CD4-positive, alpha-beta T cell (primary cell): ENCODE measurements at regions of chr6 and their contacts with region 1.

Region 1: DNA sequence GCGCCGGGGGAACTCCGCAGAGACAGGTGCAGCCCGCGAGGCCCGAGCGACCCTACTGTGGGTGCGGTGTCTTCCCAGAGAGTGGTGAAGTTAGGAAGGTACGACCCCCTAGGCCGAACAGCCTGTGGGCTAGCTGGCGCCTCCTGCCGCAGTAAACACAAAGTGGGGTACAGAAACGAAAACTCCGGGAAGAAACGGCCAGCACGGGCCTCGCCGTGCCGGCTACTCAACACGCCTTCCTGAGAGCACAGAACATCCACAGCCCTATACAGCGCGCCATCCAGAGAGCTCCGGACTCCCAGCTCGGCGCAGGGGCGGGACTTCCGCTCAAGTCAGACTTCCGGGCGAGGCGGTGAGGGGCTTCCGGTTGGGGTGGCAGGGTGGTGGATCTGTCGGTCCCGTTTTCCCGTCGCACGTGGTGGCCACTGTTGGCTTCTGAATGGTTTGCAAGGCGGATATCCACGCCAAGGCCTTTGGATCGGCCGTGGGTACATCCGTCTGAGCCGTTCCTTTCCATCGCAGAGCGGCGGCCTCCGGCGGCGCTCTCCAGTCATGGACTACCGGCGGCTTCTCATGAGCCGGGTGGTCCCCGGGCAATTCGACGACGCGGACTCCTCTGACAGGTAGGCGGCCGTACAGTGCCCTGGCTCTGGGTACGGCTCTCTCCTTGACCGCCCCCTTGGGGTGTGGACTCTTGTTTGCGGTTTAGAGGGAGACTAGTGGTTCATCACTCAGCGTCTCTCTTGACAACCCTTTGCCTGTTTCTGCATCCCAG is at the starts of genes CAGE1 and RIOK1:
- DNase-seq: peak; percentile 89 to 97 (median 92)
- ATAC-seq: peak; percentile 88
- H3K4me3 ChIP-seq: peak within 1 kb of the TSS; percentile 80
- H3K4me3 Mint-ChIP-seq: peak within 1 kb of the TSS; percentile 93
- H3K27ac ChIP-seq: peak within 1 kb of the TSS; percentile 98 to 99
- H3K27ac Mint-ChIP-seq: peak within 1 kb of the TSS; percentile 98
- H3K4me1 ChIP-seq: peaks cover 28% of the 10 kb centered on the region
- H3K4me1 Mint-ChIP-seq: peaks cover 43% of the 10 kb centered on the region
- H3K27me3 ChIP-seq: no peaks in the 10 kb centered on the region
- H3K27me3 Mint-ChIP-seq: no peaks in the 10 kb centered on the region
- CTCF ChIP-seq: no peak
- total RNA-seq, gene CAGE1: 0.38 to 0.39 TPM
- total RNA-seq, gene RIOK1: 25.5 to 28.1 TPM

Region 2: DNA sequence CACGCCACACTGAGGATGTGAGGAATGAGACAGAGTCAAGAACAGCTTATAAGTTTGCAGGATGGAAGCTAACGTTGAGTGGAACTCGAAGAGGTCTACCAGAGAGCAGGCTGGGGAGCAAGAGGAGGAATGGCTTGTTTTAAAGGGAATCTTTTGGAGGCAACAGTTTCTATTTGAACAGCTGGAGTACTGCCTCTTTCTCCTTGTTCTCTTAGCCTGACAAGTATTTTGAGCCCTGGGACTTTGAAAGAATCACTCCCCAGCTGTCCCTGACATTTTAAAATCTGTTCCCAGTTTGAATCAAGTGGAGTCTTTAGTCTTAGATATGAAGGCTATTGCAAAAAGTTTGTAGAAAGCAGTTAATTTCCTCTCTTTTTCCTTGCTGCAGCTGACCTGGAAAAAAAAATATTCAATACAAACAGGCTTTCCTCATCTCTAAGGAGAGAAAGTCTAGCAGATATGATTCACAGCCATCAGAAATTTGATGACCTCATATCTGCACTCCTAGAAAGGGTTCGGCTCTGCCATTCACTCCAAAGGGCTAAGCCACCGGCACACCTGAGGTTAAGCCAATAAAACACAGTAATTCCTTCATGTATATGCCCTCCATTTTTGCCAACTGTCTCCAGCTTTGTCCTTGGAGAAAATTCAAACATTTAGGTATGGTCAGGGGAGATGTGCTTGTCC is 820.0 kb before region 1 on chr6:
- CTCF ChIA-PET with region 1: no interaction called
- POLR2A ChIA-PET with region 1: no interaction called
- intact Hi-C with region 1: loop called in 1 of 2 experiments (anchors 5 kb)
- DNase-seq: no peak
- ATAC-seq: no peak
- H3K4me3 ChIP-seq: no peak overlapping the region
- H3K4me3 Mint-ChIP-seq: no peak overlapping the region
- H3K27ac ChIP-seq: no peak overlapping the region
- H3K27ac Mint-ChIP-seq: no peak overlapping the region
- H3K4me1 ChIP-seq: no peaks in the 10 kb centered on the region
- H3K4me1 Mint-ChIP-seq: no peaks in the 10 kb centered on the region
- H3K27me3 ChIP-seq: no peaks in the 10 kb centered on the region
- H3K27me3 Mint-ChIP-seq: peaks cover 7% of the 10 kb centered on the region
- CTCF ChIP-seq: no peak

Region 3: DNA sequence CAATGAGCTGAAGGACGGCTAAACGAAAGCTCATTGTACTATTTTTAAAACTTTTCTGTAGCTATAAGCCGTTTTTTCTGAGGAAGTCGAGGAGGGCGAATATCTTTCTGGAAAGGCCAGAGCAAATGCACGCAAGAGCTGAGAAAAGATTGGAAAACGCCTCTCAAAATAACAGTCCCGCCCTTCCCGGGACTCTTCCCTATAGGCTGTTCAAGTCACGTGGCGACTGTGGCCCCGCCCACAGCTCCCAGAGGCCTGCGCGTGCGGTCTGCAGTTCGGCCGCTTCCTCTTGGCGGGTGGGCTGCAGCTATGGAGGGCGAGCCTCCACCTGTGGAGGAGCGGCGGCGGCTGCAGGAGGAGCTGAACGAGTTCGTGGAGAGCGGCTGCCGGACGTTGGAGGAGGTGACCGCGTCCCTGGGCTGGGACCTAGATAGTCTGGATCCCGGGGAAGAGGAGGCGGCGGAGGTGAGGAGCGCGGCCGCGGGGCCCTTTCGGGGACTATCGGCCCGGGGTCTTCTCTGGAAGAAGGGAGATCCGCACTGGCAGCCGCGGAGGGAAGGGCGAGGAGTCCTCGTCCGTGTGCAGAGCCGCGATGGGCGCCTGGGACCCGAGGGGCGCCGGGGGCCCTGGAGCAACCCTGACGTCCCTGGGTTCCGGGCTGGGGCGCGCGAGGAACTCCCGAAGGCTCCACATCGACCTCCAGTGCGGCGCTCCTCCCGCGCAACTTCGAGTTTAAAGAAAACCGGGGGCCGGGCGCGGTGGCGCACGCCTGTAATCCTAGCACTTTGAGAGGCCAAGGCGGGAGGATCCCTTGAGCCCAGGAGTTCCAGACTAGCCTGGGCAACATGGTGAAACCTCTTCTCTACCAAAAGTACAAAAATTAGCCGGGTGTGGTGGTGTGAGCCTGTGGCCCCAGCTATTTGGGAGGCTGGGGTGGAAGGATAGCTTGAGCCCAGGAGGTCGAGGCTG is 200.6 kb after region 1 on chr6 and contains the start of gene SNRNP48:
- CTCF ChIA-PET with region 1: no interaction called
- POLR2A ChIA-PET with region 1: interaction called, 5 read pairs
- intact Hi-C with region 1: loop called (anchors 5 to 10 kb)
- DNase-seq: peak; percentile 79 to 94 (median 88)
- ATAC-seq: peak; percentile 98
- H3K4me3 ChIP-seq: peak within 1 kb of the TSS; percentile 96
- H3K4me3 Mint-ChIP-seq: peak within 1 kb of the TSS; percentile 100
- H3K27ac ChIP-seq: peak within 1 kb of the TSS; percentile 38 to 45
- H3K27ac Mint-ChIP-seq: peak within 1 kb of the TSS; percentile 91
- H3K4me1 ChIP-seq: peaks cover 15% of the 10 kb centered on the region
- H3K4me1 Mint-ChIP-seq: peaks cover 48% of the 10 kb centered on the region
- H3K27me3 ChIP-seq: no peaks in the 10 kb centered on the region
- H3K27me3 Mint-ChIP-seq: no peaks in the 10 kb centered on the region
- CTCF ChIP-seq: no peak
- total RNA-seq, gene SNRNP48: 12.1 to 13.4 TPM